CD4-positive, alpha-beta memory T cell (primary cell): ENCODE measurements at regions of chr17 and their contacts with region 1.

Region 1: GRCh38 chr17:18158022-18158600 is 25.5 kb upstream of the ALKBH5 start:
- DNase-seq: peak; percentile 90 to 95 (median 93)
- H3K4me3 ChIP-seq: peak overlapping the region; percentile 45 to 54
- H3K4me3 Mint-ChIP-seq: peak overlapping the region; percentile 77 to 91 (median 88)
- H3K27ac ChIP-seq: peak overlapping the region; percentile 46
- H3K27ac Mint-ChIP-seq: peak overlapping the region; percentile 69 to 96 (median 93)
- H3K4me1 ChIP-seq: peaks cover 14% of the 10 kb centered on the region
- H3K4me1 Mint-ChIP-seq: peaks cover 8 to 35% (median 12%) of the 10 kb centered on the region in 4 donors
- H3K27me3 ChIP-seq: no peaks in the 10 kb centered on the region
- H3K27me3 Mint-ChIP-seq: no peaks in the 10 kb centered on the region

Region 2: DNA sequence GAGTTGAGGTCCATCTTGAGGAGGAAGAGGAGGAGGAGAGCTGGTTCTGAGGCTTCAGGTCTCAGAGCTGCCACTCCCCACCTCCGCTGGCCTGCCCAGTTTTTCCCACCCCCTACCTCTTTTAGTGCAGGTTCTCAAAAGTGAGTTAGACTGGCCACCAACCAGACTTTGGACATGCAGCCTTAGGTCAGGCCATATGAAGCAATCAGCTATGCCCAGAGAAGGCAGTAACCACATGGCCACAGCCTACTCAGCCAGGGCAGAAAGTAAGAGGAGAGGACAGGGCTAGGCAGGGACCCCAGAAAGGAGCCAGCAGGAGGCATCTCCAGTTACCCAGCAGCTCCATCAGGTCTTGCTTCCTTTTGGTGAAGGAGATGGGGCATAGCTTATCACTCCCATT is 40.6 kb before region 1 on chr17:
- CTCF ChIA-PET with region 1: no interaction called
- POLR2A ChIA-PET with region 1: no interaction called
- intact Hi-C with region 1: no loop called
- DNase-seq: no peak
- H3K4me3 ChIP-seq: no peak overlapping the region
- H3K4me3 Mint-ChIP-seq: no peak overlapping the region
- H3K27ac ChIP-seq: no peak overlapping the region
- H3K27ac Mint-ChIP-seq: no peak overlapping the region
- H3K4me1 ChIP-seq: no peaks in the 10 kb centered on the region
- H3K4me1 Mint-ChIP-seq: no peaks in the 10 kb centered on the region
- H3K27me3 ChIP-seq: no peaks in the 10 kb centered on the region
- H3K27me3 Mint-ChIP-seq: no peaks in the 10 kb centered on the region

Region 3: DNA sequence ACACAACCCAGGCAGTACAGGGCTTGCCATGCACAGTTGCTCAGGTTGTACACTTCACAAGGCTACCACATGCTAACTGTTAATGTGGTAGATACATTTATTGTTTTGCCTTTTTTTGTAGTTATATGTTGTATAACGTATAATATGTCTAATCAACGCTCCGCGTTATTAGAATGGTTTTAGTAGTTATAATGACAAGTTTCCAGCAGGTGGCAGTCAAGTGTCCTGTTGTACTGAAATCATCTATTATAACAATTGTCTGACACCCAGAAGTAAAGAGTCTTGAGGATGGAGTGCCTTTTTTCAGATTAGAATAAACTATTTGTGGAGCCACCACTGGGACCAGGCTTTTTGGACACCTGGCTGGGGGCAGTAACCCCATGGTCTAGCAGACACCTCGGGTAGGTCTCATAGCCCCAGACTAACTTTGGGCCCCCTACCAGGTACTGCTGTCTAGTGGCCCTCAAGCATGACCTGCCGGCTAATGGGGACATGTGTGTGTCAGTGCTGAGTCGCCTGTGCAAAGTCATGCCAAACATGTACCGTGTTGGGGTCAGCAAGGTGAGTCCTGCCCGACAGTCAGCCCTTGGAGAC is 16.8 kb before region 1 on chr17:
- CTCF ChIA-PET with region 1: interaction called, 7 read pairs
- POLR2A ChIA-PET with region 1: no interaction called
- intact Hi-C with region 1: loop called (anchors 1 kb)
- DNase-seq: peak in 4 of 5 donors; percentile 49 to 61 (median 54)
- H3K4me3 ChIP-seq: no peak overlapping the region
- H3K4me3 Mint-ChIP-seq: no peak overlapping the region
- H3K27ac ChIP-seq: no peak overlapping the region
- H3K27ac Mint-ChIP-seq: peak overlapping the region in 1 of 7 donors; percentile 48
- H3K4me1 ChIP-seq: no peaks in the 10 kb centered on the region
- H3K4me1 Mint-ChIP-seq: peaks cover 0 to 6% (median 4%) of the 10 kb centered on the region in 4 donors
- H3K27me3 ChIP-seq: no peaks in the 10 kb centered on the region
- H3K27me3 Mint-ChIP-seq: no peaks in the 10 kb centered on the region